CD4-positive, alpha-beta T cell (primary cell): ENCODE measurements at regions of chr19 and their contacts with region 1.

Region 1: GRCh38 chr19:13033819-13034611 is 38.7 kb downstream of the NFIX start:
- DNase-seq: peak in 8 of 14 experiments; percentile 15 to 58 (median 34)
- ATAC-seq: peak; percentile 61
- H3K4me3 ChIP-seq: no peak overlapping the region
- H3K4me3 Mint-ChIP-seq: no peak overlapping the region
- H3K27ac ChIP-seq: no peak overlapping the region
- H3K27ac Mint-ChIP-seq: no peak overlapping the region
- H3K4me1 ChIP-seq: no peaks in the 10 kb centered on the region
- H3K4me1 Mint-ChIP-seq: no peaks in the 10 kb centered on the region
- H3K27me3 ChIP-seq: peaks cover 0 to 6% of the 10 kb centered on the region in 2 experiments
- H3K27me3 Mint-ChIP-seq: no peaks in the 10 kb centered on the region
- CTCF ChIP-seq: peak; percentile 46

Region 2: DNA sequence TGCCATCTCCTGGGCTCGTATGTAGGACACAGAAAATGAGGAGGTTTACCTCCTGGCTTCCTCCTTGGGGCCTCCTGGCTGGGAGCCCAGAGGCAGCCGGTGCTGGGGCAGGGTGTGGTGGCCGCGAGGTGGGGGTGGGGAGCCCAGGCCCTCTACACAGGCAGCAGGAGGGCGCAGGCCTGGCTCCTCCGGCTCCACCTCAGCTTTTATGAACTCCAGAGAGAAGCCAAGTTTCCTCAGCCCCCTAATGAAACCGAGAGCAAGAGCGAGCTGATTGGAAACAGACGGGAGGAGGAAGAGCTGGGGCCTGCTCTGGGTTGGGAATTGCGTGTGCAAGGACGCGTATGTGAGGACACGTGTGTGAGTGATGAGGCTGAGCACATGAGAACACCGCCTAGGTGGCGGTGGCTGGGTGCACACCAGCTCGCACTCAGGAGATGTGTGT is 45.5 kb after region 1 on chr19:
- CTCF ChIA-PET with region 1: no interaction called
- POLR2A ChIA-PET with region 1: no interaction called
- intact Hi-C with region 1: loop called in 1 of 2 experiments (anchors 5 kb)
- DNase-seq: no peak
- ATAC-seq: no peak
- H3K4me3 ChIP-seq: no peak overlapping the region
- H3K4me3 Mint-ChIP-seq: no peak overlapping the region
- H3K27ac ChIP-seq: no peak overlapping the region
- H3K27ac Mint-ChIP-seq: no peak overlapping the region
- H3K4me1 ChIP-seq: peaks cover 12% of the 10 kb centered on the region
- H3K4me1 Mint-ChIP-seq: no peaks in the 10 kb centered on the region
- H3K27me3 ChIP-seq: no peaks in the 10 kb centered on the region
- H3K27me3 Mint-ChIP-seq: no peaks in the 10 kb centered on the region
- CTCF ChIP-seq: no peak